ENCODE measurements at regions of chr1 and their contacts with region 1.

Region 1: DNA sequence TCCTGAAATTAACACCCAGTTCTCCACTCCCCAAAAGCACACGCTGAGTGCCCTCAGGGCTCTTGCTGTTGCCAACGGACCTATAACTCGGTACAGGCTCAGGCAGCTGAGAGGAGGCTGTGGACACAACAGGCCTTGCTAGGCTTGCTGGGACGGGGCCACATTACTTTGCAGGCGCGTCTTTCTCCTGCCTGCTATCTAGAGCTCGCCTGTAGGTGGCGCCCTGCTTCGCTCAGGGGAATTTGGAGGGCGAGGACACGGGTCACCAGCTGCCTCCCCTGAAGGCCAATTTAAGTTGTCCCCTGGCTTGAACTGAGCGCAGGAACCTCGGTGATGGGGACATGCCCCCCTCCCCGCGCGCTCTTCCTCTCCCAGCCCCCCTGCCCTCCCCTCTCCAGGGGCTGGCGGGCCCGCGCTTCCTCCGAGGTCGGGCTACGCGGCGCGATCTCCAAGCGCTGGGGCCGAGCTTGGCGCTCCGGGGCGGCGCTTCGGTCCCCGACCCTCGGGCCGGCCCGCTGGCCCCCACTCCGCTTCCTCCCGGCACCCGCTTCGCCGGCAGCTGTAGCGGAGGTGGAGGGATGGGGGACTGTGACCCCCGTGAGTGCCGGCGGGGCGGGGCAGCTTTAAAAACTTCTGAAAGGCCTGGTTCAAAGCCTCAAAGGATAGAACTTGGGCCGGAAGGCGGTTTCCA is 32.4 kb upstream of the NFIA start:
- DNase-seq: peak; percentile 97
- H3K4me3 ChIP-seq: peak overlapping the region; percentile 66 to 94 (median 90)
- H3K27ac ChIP-seq: peak overlapping the region; percentile 94 to 99 (median 98)
- H3K4me1 ChIP-seq: peaks cover 0 to 41% (median 35%) of the 10 kb centered on the region in 4 donors
- H3K27me3 ChIP-seq: no peaks in the 10 kb centered on the region
- CTCF ChIP-seq: peak; percentile 93 to 96 (median 96)
- EP300 ChIP-seq: no peak
- POLR2A ChIP-seq: peak; percentile 27 to 36

Region 2: DNA sequence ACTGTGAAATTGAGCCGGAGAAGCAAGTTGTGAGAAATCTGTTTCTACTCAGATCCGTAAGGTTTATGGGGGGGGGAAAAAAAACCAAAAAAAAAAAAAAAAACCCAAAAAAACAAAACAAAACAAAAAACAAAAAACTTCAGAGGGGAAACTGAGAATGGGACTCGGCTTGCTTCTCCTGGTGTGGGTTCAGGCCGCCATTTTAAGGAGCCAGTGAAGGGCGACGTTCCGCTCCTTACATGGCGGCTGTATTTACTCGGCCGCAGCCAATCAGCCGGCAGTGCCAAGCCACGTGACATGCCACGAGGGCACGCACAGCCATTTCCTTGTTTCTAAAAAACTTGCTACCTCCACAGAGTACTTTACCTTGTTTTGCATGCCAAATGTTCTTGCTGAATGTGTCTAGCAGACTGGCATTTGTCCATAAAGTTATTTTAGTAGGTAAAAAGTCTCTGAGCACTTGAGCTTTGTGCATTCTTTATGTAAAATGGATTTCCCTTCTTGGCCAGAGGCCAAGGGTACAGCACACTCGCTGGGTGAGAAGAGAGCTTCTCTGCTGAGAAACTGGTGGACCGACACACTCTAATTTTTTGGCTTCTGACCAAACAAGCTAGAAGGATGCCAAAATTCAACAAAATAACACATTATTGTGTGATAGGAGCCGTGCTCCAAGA is 134.2 kb after region 1 on chr1:
- intact Hi-C with region 1: loop called (anchors 10 kb)
- DNase-seq: peak; percentile 98
- H3K4me3 ChIP-seq: peak overlapping the region; percentile 29 to 41 (median 38)
- H3K27ac ChIP-seq: peak overlapping the region; percentile 78 to 88 (median 84)
- H3K4me1 ChIP-seq: peaks cover 0 to 81% (median 62%) of the 10 kb centered on the region in 4 donors
- H3K27me3 ChIP-seq: no peaks in the 10 kb centered on the region
- CTCF ChIP-seq: no peak
- EP300 ChIP-seq: no peak
- POLR2A ChIP-seq: no peak

Region 3: DNA sequence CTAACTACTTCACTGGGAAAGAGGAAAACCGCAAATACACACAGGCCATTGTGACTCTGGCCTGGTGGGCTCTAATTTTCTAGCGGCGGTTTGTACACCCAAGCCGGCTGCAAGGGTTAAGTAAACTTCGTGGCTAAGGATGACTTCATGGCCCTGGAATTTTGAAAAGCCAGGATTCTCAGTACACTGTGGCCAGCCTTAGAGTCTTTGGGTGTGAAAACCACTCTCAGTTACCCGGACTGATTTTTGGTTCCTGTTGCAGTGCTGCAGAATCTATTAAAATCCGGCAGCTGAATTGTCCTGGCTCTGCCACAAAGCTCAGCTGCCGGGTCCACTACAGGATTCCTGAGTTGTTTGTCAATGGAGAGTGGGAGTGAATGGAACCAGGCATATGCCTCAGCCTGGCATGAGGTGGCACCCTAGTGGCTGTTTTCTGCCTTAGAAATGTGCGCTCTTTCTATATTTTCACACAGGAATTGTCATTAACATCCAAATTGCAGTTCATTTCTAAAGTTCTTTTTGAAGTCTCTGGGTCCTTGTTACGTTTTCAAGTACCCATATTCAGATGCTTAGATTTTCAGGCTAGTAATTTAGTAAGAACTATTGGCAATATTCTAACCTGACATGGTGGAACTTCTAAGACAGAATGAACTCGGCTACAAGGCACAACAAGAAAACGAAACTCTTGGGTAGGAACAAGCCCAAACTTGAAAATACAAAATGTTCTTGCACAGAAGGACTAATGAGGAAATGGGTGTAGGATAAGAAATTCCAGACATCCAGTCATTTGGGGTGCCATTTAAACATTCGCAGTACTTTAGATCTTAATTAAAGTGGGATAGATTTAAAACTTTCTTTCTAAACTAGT is 288.2 kb after region 1 on chr1:
- intact Hi-C with region 1: loop called (anchors 1 kb)
- DNase-seq: peak; percentile 84
- H3K4me3 ChIP-seq: peak overlapping the region in 2 of 4 donors; percentile 5
- H3K27ac ChIP-seq: peak overlapping the region; percentile 64 to 80 (median 78)
- H3K4me1 ChIP-seq: peaks cover 0 to 43% (median 38%) of the 10 kb centered on the region in 4 donors
- H3K27me3 ChIP-seq: no peaks in the 10 kb centered on the region
- CTCF ChIP-seq: peak; percentile 55 to 77 (median 68)
- EP300 ChIP-seq: peak in 1 of 4 donors; percentile 2
- POLR2A ChIP-seq: no peak

Region 4: DNA sequence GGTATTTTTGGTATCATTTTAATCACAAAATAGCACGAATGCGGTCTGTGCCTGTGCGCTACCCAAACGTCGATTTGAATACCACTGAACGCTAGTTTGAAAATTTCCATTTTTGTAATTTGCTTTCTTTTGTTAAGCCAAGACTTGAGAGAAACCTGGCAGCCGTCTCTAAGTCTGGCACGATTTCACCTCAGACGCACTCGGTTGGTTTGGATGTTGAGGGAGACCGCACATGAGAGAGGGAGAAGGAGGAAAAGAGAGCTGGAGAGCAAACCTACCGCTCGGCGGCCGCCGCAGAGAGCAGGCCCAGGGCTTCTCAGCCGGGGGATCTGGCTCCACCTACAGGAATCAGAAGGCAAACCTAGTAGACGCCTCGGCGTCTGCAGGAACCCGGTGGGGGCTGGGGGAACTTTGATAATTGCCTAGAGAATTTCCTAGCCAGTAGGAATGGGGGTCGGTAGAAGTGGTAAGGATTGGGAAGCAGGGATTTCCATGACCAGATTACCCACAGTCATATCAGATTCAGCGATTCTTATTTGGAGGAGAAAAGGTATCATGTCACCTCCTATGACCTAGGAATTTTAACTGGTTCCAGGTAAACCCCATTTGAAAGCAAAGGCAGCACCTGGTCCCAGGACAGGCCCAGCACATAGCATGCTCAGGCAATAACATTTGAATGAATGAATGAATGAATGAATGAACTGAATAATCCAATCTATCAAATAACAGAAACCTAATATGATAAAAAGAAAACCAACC is 591.8 kb after region 1 on chr1:
- intact Hi-C with region 1: loop called (anchors 5 kb)
- DNase-seq: peak; percentile 90
- H3K4me3 ChIP-seq: peak overlapping the region in 2 of 4 donors; percentile 21 to 22
- H3K27ac ChIP-seq: peak overlapping the region; percentile 66 to 80 (median 76)
- H3K4me1 ChIP-seq: peaks cover 0 to 54% (median 39%) of the 10 kb centered on the region in 4 donors
- H3K27me3 ChIP-seq: no peaks in the 10 kb centered on the region
- CTCF ChIP-seq: peak; percentile 17 to 67 (median 43)
- EP300 ChIP-seq: no peak
- POLR2A ChIP-seq: no peak

Region 5: DNA sequence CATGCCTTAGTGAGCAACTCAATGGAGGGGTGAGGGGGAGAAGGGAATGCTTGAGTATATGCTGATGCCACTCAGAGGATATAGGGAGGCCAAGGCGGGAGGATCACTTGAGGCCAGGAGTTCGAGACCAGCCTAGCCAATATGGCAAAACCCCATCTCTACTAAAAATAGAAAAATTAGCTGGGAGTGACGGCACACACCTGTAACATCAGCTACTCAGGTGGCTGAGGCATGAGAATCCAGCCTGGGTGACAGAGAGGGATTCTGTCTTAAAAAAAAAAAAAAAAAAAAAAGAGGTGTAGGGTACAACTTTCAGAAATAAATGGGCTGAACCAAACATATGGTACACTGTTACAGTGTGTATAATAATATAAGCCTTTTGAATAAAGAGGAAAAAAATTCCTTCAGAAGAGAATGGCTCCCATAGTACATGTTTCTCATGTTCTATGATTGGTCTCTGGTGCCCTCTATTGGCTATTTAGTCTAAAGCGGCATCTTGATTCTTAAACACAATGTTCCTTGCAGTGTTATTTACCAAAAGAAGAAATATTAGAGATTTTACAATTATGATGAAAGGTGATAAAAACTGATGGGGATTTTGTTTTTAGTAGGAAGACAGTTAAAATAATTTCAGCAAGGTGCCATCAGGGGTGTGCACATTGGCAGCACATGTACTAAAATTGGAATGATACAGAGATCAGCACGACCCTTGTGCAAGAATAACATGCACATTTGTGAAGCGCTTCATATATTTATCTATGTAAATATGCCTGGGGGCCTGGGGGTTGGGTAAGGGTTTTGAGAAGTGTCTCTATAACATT is 802.1 kb after region 1 on chr1:
- intact Hi-C with region 1: loop called (anchors 5 kb)
- DNase-seq: no peak
- H3K4me3 ChIP-seq: no peak overlapping the region
- H3K27ac ChIP-seq: no peak overlapping the region
- H3K4me1 ChIP-seq: peaks cover 0 to 8% (median 7%) of the 10 kb centered on the region in 4 donors
- H3K27me3 ChIP-seq: no peaks in the 10 kb centered on the region
- CTCF ChIP-seq: peak in 3 of 4 experiments; percentile 50 to 61 (median 54)
- EP300 ChIP-seq: no peak
- POLR2A ChIP-seq: no peak